ENCODE measurements at regions of chr13 and their contacts with region 1.

Region 1: DNA sequence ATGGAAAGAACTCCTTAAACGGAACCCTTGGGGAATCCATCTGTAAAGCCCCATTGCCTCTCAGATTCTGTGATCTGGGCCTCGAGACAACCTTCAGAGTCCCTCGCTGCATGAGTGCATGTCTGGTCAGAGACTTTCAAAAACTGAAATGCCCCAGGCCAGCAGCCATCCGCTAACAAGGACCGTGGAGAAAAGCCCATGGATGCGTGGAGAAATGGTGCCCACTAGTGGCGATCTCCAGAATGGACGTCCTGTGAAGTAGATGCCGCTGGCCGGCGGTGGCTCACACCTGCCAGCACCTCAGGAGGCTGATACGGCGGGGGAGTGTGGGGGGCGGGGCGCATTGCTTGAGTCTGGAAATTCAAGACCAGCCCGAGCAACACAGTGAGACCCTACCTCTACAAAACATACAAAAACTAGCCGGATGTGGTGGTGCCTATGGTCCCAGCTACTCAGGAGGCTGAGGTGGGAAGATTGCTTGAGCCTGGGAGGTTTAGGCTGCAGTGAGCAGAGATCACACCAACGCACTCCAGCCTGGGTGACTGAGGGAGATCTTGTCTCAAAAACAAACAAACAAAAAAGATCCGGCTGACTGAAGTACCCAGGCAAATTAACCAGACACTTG is 7.9 kb upstream of the CDC16 start:
- DNase-seq: peak; percentile 81 to 93
- ATAC-seq: peak; percentile 83 to 91 (median 87)
- H3K4me3 ChIP-seq: no peak overlapping the region
- H3K4me3 Mint-ChIP-seq: no peak overlapping the region
- H3K27ac ChIP-seq: no peak overlapping the region
- H3K27ac Mint-ChIP-seq: peak overlapping the region; percentile 19 to 46
- H3K4me1 ChIP-seq: peaks cover 34% of the 10 kb centered on the region
- H3K4me1 Mint-ChIP-seq: peaks cover 29 to 46% of the 10 kb centered on the region in 2 donors
- H3K27me3 ChIP-seq: no peaks in the 10 kb centered on the region
- H3K27me3 Mint-ChIP-seq: peaks cover 4 to 13% of the 10 kb centered on the region in 2 donors
- CTCF ChIP-seq: peak; percentile 87

Region 2: GRCh38 chr13:113816946-113817859 is 409.6 kb before region 1 on chr13:
- intact Hi-C with region 1: loop called (anchors 1 kb)
- DNase-seq: peak; percentile 68 to 94
- ATAC-seq: peak; percentile 83 to 94 (median 89)
- H3K4me3 ChIP-seq: no peak overlapping the region
- H3K4me3 Mint-ChIP-seq: peak overlapping the region; percentile 13
- H3K27ac ChIP-seq: no peak overlapping the region
- H3K27ac Mint-ChIP-seq: peak overlapping the region in 1 of 2 donors; percentile 31
- H3K4me1 ChIP-seq: peaks cover 20% of the 10 kb centered on the region
- H3K4me1 Mint-ChIP-seq: peaks cover 12 to 20% of the 10 kb centered on the region in 2 donors
- H3K27me3 ChIP-seq: peaks cover 4% of the 10 kb centered on the region
- H3K27me3 Mint-ChIP-seq: peaks cover 0 to 9% of the 10 kb centered on the region in 2 donors
- CTCF ChIP-seq: peak; percentile 66

Region 3: GRCh38 chr13:113951246-113951999 is 275.4 kb before region 1 on chr13:
- intact Hi-C with region 1: loop called (anchors 1 kb)
- DNase-seq: peak; percentile 30 to 61
- ATAC-seq: peak in 2 of 3 donors; percentile 73 to 80
- H3K4me3 ChIP-seq: no peak overlapping the region
- H3K4me3 Mint-ChIP-seq: no peak overlapping the region
- H3K27ac ChIP-seq: no peak overlapping the region
- H3K27ac Mint-ChIP-seq: no peak overlapping the region
- H3K4me1 ChIP-seq: peaks cover 18% of the 10 kb centered on the region
- H3K4me1 Mint-ChIP-seq: peaks cover 10 to 53% of the 10 kb centered on the region in 2 donors
- H3K27me3 ChIP-seq: no peaks in the 10 kb centered on the region
- H3K27me3 Mint-ChIP-seq: no peaks in the 10 kb centered on the region
- CTCF ChIP-seq: peak; percentile 23

Region 4: GRCh38 chr13:114047358-114047881 is 179.4 kb before region 1 on chr13:
- intact Hi-C with region 1: loop called (anchors 5 kb)
- DNase-seq: no peak
- ATAC-seq: no peak
- H3K4me3 ChIP-seq: no peak overlapping the region
- H3K4me3 Mint-ChIP-seq: peak overlapping the region; percentile 73
- H3K27ac ChIP-seq: no peak overlapping the region
- H3K27ac Mint-ChIP-seq: peak overlapping the region; percentile 91 to 92
- H3K4me1 ChIP-seq: peaks cover 81% of the 10 kb centered on the region
- H3K4me1 Mint-ChIP-seq: peaks cover 74 to 80% of the 10 kb centered on the region in 2 donors
- H3K27me3 ChIP-seq: no peaks in the 10 kb centered on the region
- H3K27me3 Mint-ChIP-seq: no peaks in the 10 kb centered on the region
- CTCF ChIP-seq: no peak

Region 5: GRCh38 chr13:114107686-114108081 is 119.1 kb before region 1 on chr13:
- intact Hi-C with region 1: loop called (anchors 2 kb)
- DNase-seq: no peak
- ATAC-seq: no peak
- H3K4me3 ChIP-seq: no peak overlapping the region
- H3K4me3 Mint-ChIP-seq: peak overlapping the region; percentile 86
- H3K27ac ChIP-seq: peak overlapping the region; percentile 78
- H3K27ac Mint-ChIP-seq: peak overlapping the region; percentile 95 to 100
- H3K4me1 ChIP-seq: peaks cover 93% of the 10 kb centered on the region
- H3K4me1 Mint-ChIP-seq: peaks cover 66 to 85% of the 10 kb centered on the region in 2 donors
- H3K27me3 ChIP-seq: no peaks in the 10 kb centered on the region
- H3K27me3 Mint-ChIP-seq: no peaks in the 10 kb centered on the region
- CTCF ChIP-seq: no peak

Region 6: DNA sequence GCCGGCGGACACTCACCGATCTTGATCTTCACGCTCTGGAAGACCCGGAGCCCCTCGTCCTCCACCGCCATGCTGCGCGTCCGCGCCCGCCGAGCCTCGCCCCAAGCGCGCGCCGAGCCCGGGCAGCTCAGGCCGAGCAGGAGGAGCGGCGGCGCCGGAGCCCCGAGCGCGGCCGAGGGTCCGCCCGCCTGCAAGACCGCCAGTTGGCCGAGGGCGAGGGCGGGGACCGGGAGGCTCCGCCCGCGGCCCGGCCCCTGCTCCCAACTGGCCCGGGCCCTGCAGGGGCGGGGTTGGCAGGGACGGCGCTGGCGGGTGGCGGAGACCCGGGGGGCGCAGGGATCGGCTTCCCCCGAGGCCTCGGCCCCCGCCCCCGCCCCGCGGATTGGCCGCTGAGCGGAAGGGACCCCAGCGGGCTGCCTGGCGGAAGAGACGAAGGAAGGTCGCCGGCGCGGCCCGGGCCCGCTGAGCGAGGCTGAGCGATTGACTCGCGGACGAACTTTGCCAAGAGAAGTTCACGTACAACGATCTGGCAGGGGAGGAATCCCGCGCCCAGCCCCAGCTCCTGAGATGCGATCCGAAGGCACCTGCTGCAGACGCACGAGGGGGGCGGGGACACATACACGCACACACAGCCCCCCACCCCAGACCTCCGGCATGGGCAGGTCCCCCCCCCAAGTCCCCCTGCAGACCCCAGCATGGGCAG is 94.2 kb before region 1 on chr13 and contains the start of gene RASA3:
- intact Hi-C with region 1: loop called (anchors 2 kb)
- DNase-seq: peak; percentile 63 to 80
- ATAC-seq: peak; percentile 51 to 72 (median 64)
- H3K4me3 ChIP-seq: peak within 1 kb of the TSS; percentile 97
- H3K4me3 Mint-ChIP-seq: peak within 1 kb of the TSS; percentile 98
- H3K27ac ChIP-seq: peak within 1 kb of the TSS; percentile 84
- H3K27ac Mint-ChIP-seq: peak within 1 kb of the TSS; percentile 91 to 92
- H3K4me1 ChIP-seq: peaks cover 48% of the 10 kb centered on the region
- H3K4me1 Mint-ChIP-seq: peaks cover 53 to 66% of the 10 kb centered on the region in 2 donors
- H3K27me3 ChIP-seq: no peaks in the 10 kb centered on the region
- H3K27me3 Mint-ChIP-seq: no peaks in the 10 kb centered on the region
- CTCF ChIP-seq: no peak
- total RNA-seq, gene RASA3: 252 to 277 (median 274) TPM

Region 7: DNA sequence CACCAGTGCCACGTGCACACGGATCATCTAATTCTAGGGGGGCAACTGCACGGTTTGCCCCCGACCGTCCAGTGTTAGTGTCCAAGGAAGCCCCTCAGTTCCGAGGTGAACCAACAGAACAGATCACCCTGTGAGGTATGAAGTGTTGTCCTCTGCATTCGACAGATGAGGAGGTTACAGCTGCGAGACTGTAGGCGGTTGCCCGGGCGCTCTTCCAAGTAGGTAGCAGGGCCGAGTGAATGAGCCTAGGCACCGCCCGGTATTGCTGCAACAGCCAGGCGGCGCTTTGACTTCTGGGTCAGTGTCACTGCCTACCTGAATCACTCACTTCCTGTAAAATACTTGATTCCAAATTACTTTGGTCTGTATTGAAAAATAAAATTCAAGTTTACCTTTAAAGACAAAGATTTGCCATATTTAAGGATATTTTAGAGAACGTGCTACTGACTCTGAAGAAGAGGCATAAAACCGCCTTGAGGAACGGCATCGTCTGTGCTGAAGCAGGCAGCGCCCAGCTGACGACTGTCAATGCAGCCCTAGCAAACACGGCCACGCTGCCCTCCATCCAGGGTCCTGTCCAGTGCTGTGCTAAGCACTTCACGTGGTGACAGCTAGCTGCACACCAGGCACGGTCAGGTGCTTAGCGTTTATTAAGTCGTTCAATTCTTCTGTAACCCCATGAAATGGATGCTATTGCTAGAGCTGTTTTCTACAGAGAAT is 75.1 kb before region 1 on chr13:
- intact Hi-C with region 1: no loop called
- DNase-seq: peak in 1 of 2 donors; percentile 77
- ATAC-seq: no peak
- H3K4me3 ChIP-seq: no peak overlapping the region
- H3K4me3 Mint-ChIP-seq: no peak overlapping the region
- H3K27ac ChIP-seq: no peak overlapping the region
- H3K27ac Mint-ChIP-seq: peak overlapping the region; percentile 89 to 99
- H3K4me1 ChIP-seq: peaks cover 87% of the 10 kb centered on the region
- H3K4me1 Mint-ChIP-seq: peaks cover 74 to 78% of the 10 kb centered on the region in 2 donors
- H3K27me3 ChIP-seq: no peaks in the 10 kb centered on the region
- H3K27me3 Mint-ChIP-seq: no peaks in the 10 kb centered on the region
- CTCF ChIP-seq: no peak

Region 8: DNA sequence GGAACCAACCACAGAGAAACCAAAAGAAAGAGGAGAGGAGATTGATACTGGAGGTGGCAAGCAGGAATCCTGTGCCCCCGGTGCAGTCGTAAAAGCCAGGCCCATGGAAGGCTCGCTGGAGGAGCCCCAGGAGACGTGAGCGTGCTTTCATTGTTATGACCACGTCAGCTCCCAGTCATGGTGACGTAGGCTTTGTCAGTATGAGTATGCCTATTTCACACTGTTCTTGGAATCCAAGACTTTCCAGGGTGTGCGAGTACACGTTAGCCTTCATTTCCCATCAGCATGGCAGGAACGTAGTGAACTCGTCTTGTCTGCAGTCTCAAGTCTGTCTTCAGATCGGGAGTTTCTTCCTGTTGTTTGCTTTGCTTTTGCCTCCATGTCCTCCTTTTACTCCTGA is 72.1 kb after region 1 on chr13:
- intact Hi-C with region 1: no loop called
- DNase-seq: no peak
- ATAC-seq: no peak
- H3K4me3 ChIP-seq: no peak overlapping the region
- H3K4me3 Mint-ChIP-seq: no peak overlapping the region
- H3K27ac ChIP-seq: no peak overlapping the region
- H3K27ac Mint-ChIP-seq: no peak overlapping the region
- H3K4me1 ChIP-seq: no peaks in the 10 kb centered on the region
- H3K4me1 Mint-ChIP-seq: peaks cover 9 to 10% of the 10 kb centered on the region in 2 donors
- H3K27me3 ChIP-seq: no peaks in the 10 kb centered on the region
- H3K27me3 Mint-ChIP-seq: no peaks in the 10 kb centered on the region
- CTCF ChIP-seq: no peak

Region 9: GRCh38 chr13:114325729-114326128 is 98.9 kb after region 1 on chr13:
- intact Hi-C with region 1: no loop called
- DNase-seq: no peak
- ATAC-seq: no peak
- H3K4me3 ChIP-seq: no peak overlapping the region
- H3K4me3 Mint-ChIP-seq: no peak overlapping the region
- H3K27ac ChIP-seq: no peak overlapping the region
- H3K27ac Mint-ChIP-seq: no peak overlapping the region
- H3K4me1 ChIP-seq: no peaks in the 10 kb centered on the region
- H3K4me1 Mint-ChIP-seq: peaks cover 0 to 13% of the 10 kb centered on the region in 2 donors
- H3K27me3 ChIP-seq: no peaks in the 10 kb centered on the region
- H3K27me3 Mint-ChIP-seq: no peaks in the 10 kb centered on the region
- CTCF ChIP-seq: no peak

Measured in natural killer cell (primary cell).